B cell (primary cell): ENCODE measurements at regions of chr9 and their contacts with region 1.

Region 1: DNA sequence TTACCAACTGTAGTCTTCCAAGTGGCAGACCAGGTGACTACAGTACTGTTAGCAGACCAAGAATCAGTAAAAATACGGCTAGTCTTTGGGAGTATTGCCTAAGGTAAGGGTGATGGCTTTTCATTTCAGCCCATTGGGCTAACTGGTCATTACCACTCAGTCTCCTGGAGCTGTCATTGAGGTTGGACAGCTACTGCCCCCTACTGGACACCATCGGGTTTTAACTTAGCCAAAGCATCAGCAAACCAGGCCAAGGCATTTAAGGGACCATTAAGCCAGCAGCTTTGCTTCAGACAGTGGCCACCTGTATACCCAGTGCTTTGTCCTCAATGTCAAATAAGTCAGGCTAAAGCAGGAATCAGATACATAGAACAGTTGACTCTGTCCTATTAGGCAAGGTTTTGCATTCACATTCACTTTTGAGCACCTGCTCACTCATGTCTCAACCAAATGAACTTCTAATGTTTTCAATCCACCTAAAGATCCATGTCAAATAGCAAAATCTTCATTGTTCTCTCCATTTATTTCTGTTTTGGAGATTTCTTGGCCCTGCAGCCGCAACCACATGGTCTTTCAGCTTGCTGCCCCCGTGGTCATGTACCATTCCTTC is 117.2 kb downstream of the INVS start:
- DNase-seq: peak; percentile 81
- ATAC-seq: peak; percentile 85
- H3K4me3 ChIP-seq: no peak overlapping the region
- H3K4me3 Mint-ChIP-seq: no peak overlapping the region
- H3K27ac ChIP-seq: no peak overlapping the region
- H3K27ac Mint-ChIP-seq: no peak overlapping the region
- H3K4me1 ChIP-seq: no peaks in the 10 kb centered on the region
- H3K4me1 Mint-ChIP-seq: no peaks in the 10 kb centered on the region
- H3K27me3 ChIP-seq: no peaks in the 10 kb centered on the region
- H3K27me3 Mint-ChIP-seq: no peaks in the 10 kb centered on the region
- CTCF ChIP-seq: peak; percentile 79

Region 2: GRCh38 chr9:100202806-100203205 is 13.5 kb before region 1 on chr9:
- CTCF ChIA-PET with region 1: interaction called, 8 read pairs
- POLR2A ChIA-PET with region 1: no interaction called
- intact Hi-C with region 1: loop called (anchors 2 kb)
- DNase-seq: no peak
- ATAC-seq: no peak
- H3K4me3 ChIP-seq: no peak overlapping the region
- H3K4me3 Mint-ChIP-seq: no peak overlapping the region
- H3K27ac ChIP-seq: no peak overlapping the region
- H3K27ac Mint-ChIP-seq: no peak overlapping the region
- H3K4me1 ChIP-seq: no peaks in the 10 kb centered on the region
- H3K4me1 Mint-ChIP-seq: no peaks in the 10 kb centered on the region
- H3K27me3 ChIP-seq: no peaks in the 10 kb centered on the region
- H3K27me3 Mint-ChIP-seq: no peaks in the 10 kb centered on the region
- CTCF ChIP-seq: no peak

Region 3: GRCh38 chr9:100370064-100370723 is 153.9 kb after region 1 on chr9:
- CTCF ChIA-PET with region 1: no interaction called
- POLR2A ChIA-PET with region 1: no interaction called
- intact Hi-C with region 1: no loop called
- DNase-seq: no peak
- ATAC-seq: no peak
- H3K4me3 ChIP-seq: no peak overlapping the region
- H3K4me3 Mint-ChIP-seq: no peak overlapping the region
- H3K27ac ChIP-seq: no peak overlapping the region
- H3K27ac Mint-ChIP-seq: no peak overlapping the region
- H3K4me1 ChIP-seq: no peaks in the 10 kb centered on the region
- H3K4me1 Mint-ChIP-seq: no peaks in the 10 kb centered on the region
- H3K27me3 ChIP-seq: no peaks in the 10 kb centered on the region
- H3K27me3 Mint-ChIP-seq: no peaks in the 10 kb centered on the region
- CTCF ChIP-seq: no peak